Activated naive CD8-positive, alpha-beta T cell treated with anti-CD3 and anti-CD28 coated beads, Interleukin-2, amount 10 ng/mL, durations not matched to agents 7 days and 5 days (primary cell): ENCODE measurements at regions of chr5 and their contacts with region 1.

Region 1: DNA sequence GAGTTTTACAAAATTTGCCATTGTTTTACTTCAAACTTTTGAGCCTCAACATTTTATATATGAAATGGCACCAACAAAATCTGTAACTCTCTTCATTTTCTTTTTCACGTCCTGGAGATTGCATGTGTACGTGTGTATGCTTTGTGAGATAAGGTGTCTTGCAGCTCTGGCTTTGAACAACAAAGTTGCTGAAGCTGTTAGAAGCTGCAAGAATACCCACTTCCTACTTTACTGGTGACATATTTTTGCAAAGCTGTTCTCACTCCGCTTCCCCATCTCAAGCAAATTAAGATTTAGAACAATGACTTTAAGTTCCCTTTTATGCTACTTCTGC is 41.8 kb downstream of the FYB1 start:
- DNase-seq: no peak
- ATAC-seq: peak; percentile 45
- H3K4me3 Mint-ChIP-seq: peak overlapping the region; percentile 75
- H3K27ac Mint-ChIP-seq: peak overlapping the region; percentile 89
- H3K4me1 Mint-ChIP-seq: peaks cover 84% of the 10 kb centered on the region
- H3K27me3 Mint-ChIP-seq: no peaks in the 10 kb centered on the region

Region 2: DNA sequence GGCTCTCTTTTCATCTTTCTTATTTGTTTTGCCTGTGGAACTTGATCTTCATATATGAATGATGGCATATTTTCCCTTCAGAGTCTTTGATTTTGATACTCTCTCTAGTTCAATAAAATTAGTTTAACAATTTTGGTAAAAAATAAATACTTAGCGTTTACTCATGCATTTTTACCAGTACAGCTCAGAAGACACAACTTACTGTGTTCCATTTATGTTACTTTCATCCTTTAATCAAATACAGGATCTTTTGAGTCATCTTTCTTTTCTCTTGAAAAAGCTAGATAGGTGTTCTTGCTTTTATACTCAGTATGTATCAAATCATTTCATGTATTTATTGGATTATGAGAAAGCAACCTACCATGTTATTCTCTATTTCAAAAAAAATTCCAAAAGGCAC is 56.3 kb before region 1 on chr5:
- POLR2A ChIA-PET with region 1: no interaction called
- DNase-seq: no peak
- ATAC-seq: no peak
- H3K4me3 Mint-ChIP-seq: no peak overlapping the region
- H3K27ac Mint-ChIP-seq: no peak overlapping the region
- H3K4me1 Mint-ChIP-seq: peaks cover 15% of the 10 kb centered on the region
- H3K27me3 Mint-ChIP-seq: no peaks in the 10 kb centered on the region

Region 3: GRCh38 chr5:39138892-39139291 is 38.7 kb before region 1 on chr5:
- POLR2A ChIA-PET with region 1: no interaction called
- DNase-seq: no peak
- ATAC-seq: no peak
- H3K4me3 Mint-ChIP-seq: no peak overlapping the region
- H3K27ac Mint-ChIP-seq: no peak overlapping the region
- H3K4me1 Mint-ChIP-seq: peaks cover 15% of the 10 kb centered on the region
- H3K27me3 Mint-ChIP-seq: no peaks in the 10 kb centered on the region

Region 4: DNA sequence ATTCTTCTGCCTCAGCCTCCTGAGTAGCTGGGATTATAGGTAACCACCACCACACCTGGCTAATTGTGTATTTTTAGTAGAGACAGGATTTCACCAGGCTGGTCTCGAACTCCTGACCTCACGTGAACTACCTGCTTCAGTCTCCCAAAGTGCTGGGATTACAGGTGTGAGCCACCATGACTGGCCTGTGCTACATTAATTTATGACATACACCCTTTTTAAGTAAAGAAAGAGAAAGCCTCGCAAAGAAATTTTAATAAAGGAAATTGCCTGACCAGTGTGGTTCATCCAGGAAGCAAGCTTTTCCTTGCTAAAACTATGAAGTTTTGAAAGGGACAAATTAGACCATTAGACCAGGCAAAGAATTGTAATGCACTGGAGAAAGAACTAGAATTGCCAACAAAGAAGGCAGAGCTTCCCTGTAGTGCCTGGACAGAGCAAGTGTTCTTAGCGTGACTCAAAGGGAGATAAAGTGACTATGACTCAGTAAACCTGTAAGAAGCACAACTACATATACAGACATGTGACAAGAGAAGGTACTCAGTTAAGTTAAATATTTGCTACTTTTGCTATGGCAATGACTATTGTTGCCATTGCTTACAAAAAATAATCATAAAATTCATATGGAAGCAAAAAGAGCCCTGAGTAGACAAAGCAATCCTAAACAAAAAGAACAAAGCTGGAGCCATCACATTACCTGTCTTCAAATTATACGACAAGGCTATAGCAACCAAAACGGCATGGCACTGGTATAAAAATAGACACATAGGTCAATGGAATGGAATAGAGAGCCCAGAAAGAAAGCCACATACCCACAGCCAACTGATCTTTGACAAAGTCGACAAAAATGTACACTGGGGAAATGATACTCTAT is 12.8 kb before region 1 on chr5:
- POLR2A ChIA-PET with region 1: interaction called, 15 read pairs
- DNase-seq: no peak
- ATAC-seq: peak; percentile 84
- H3K4me3 Mint-ChIP-seq: peak overlapping the region; percentile 74
- H3K27ac Mint-ChIP-seq: peak overlapping the region; percentile 78
- H3K4me1 Mint-ChIP-seq: peaks cover 63% of the 10 kb centered on the region
- H3K27me3 Mint-ChIP-seq: no peaks in the 10 kb centered on the region

Region 5: GRCh38 chr5:39194466-39195136 is 17.0 kb after region 1 on chr5:
- POLR2A ChIA-PET with region 1: interaction called, 204 read pairs
- DNase-seq: no peak
- ATAC-seq: peak; percentile 15
- H3K4me3 Mint-ChIP-seq: peak overlapping the region; percentile 88
- H3K27ac Mint-ChIP-seq: peak overlapping the region; percentile 89
- H3K4me1 Mint-ChIP-seq: peaks cover 69% of the 10 kb centered on the region
- H3K27me3 Mint-ChIP-seq: no peaks in the 10 kb centered on the region

Region 6: GRCh38 chr5:39202597-39203274 is 25.1 kb after region 1 on chr5:
- POLR2A ChIA-PET with region 1: interaction called, 70 read pairs
- DNase-seq: peak; percentile 47
- ATAC-seq: peak; percentile 51
- H3K4me3 Mint-ChIP-seq: peak overlapping the region; percentile 91
- H3K27ac Mint-ChIP-seq: peak overlapping the region; percentile 96
- H3K4me1 Mint-ChIP-seq: peaks cover 32% of the 10 kb centered on the region
- H3K27me3 Mint-ChIP-seq: no peaks in the 10 kb centered on the region

Region 7: DNA sequence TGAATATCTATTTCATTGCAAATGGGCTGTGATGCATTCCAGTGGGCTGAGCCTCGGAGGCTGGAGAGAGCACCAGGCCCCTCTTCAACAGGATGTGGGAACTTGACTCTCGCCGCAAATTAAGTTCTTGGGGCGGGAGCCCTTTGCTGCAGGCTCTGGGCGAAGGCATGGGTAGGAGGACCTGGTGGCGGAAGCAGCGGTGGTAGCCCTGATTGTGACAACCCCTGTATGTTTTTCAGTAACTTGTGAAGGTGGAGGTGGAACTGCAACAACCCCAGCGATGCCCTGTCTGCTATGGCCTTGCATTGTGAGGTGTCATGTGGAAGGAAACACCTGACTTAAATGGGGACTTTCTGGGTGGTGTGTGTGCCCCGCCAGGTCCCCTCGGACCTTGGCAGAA is 32.3 kb after region 1 on chr5:
- POLR2A ChIA-PET with region 1: interaction called, 53 read pairs
- DNase-seq: peak; percentile 78
- ATAC-seq: peak; percentile 81
- H3K4me3 Mint-ChIP-seq: peak overlapping the region; percentile 81
- H3K27ac Mint-ChIP-seq: peak overlapping the region; percentile 92
- H3K4me1 Mint-ChIP-seq: peaks cover 73% of the 10 kb centered on the region
- H3K27me3 Mint-ChIP-seq: no peaks in the 10 kb centered on the region

Region 8: DNA sequence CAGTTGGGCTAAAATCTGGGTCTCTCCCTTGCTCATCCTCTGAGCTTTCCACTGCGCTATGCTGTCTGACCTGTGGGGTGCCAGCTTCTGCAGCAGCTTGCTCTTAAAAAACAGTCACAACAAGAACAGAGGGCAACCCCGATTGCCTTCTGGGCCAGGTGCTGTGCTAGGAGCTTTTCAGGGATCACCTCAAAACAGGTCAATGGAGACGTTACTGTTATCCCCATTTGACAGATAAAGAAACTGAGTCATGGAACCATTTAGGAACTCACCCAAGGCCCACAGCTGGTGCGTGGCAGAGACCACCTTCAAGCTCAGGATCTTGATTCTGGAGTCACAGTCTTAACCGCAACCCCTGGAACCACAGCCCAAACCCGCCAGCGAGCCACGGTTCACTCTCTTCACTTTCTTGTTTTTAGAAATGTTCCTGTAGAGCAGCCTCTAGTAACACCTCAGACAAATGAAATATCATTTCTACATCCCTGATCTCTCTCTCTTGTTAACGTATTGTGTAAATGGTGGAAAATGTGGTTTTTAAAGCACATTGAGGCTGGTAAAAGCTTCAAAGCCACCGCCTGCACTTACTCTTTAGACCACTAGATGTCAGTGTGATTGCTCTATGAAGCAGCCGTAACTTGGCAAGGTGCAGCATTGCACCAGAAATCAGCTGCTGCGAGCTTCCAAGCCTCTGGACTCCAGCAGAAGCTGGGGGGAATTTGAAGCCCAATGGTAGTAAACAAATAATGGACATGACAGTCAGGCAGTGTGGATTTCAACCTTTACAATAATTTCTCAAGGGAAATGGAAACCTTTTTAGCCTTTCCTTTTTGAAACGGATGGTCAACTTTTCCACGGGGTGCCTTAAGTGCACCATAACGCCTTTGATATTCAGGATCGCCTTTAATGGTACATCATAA is 40.0 kb after region 1 on chr5:
- POLR2A ChIA-PET with region 1: interaction called, 53 read pairs
- DNase-seq: peak; percentile 78
- ATAC-seq: peak; percentile 65
- H3K4me3 Mint-ChIP-seq: peak overlapping the region; percentile 94
- H3K27ac Mint-ChIP-seq: peak overlapping the region; percentile 98
- H3K4me1 Mint-ChIP-seq: peaks cover 46% of the 10 kb centered on the region
- H3K27me3 Mint-ChIP-seq: no peaks in the 10 kb centered on the region

Region 9: DNA sequence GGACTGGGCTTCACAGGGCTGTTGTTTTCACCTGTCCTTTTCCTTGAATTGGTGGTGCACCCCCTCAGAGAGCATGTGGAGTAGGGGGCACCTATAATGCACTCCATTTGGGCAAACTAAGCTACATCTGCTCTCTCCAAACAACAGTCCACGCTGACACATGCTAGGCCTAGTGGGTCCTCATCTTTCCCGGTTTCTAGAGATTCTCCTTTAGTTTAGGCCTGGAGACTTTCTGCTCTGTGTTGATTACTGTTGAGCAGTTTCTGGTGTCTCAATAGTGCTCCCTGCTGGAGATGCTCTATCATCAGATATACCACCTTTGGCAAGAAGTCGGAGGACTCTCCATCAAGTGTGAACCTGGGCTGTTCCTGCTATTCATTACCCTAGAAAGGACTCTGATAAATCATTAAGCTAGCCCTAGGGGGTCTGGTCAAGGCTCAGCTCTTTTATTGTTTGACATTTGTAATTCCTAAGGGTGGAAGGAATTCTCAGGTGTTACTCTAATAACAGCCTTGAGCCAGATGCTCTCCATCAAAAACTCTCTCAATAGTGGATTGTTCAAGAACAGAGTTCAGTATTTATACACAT is 105.7 kb after region 1 on chr5:
- POLR2A ChIA-PET with region 1: no interaction called
- DNase-seq: peak; percentile 35
- ATAC-seq: peak; percentile 97
- H3K4me3 Mint-ChIP-seq: no peak overlapping the region
- H3K27ac Mint-ChIP-seq: peak overlapping the region; percentile 2
- H3K4me1 Mint-ChIP-seq: peaks cover 15% of the 10 kb centered on the region
- H3K27me3 Mint-ChIP-seq: peaks cover 6% of the 10 kb centered on the region

Region 10: DNA sequence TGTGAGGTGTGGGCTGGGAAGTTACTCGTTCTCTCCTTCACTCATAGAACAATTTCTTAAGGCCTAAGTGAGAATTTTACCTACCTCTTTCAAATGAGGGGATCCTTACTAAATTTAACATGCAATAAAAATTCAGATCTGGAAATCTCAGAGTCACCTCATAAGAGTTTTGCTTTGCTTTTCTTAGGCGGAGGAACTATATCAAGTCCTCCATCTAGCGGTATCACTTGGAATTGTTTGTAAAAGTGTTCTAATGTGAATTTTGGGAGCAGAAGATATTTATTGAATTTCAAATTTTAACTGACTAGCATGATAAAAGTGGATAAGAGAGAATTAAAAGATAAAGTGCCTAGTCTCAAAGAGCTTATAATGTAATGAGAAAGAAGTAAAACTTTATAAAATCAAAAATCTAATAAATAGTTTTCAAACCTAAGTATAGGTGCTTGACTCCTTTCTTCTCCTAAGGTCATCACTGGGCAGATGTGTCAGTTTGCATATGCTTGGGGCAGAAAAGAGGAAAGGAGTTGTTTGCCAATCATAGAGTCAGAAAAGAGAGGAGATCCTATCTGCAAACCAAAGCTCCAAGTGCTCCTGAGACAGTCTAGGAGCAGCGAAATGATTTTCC is 392.9 kb after region 1 on chr5:
- POLR2A ChIA-PET with region 1: no interaction called
- DNase-seq: no peak
- ATAC-seq: no peak
- H3K4me3 Mint-ChIP-seq: no peak overlapping the region
- H3K27ac Mint-ChIP-seq: no peak overlapping the region
- H3K4me1 Mint-ChIP-seq: peaks cover 2% of the 10 kb centered on the region
- H3K27me3 Mint-ChIP-seq: peaks cover 22% of the 10 kb centered on the region